ENCODE measurements at regions of chr5 and their contacts with region 1.

Region 1: GRCh38 chr5:124649491-124650146 is 96.8 kb downstream of the ZNF608 start:
- DNase-seq: peak; percentile 71 to 88
- ATAC-seq: peak; percentile 90 to 93 (median 92)
- H3K4me3 ChIP-seq: no peak overlapping the region
- H3K4me3 Mint-ChIP-seq: peak overlapping the region; percentile 82
- H3K27ac ChIP-seq: peak overlapping the region; percentile 8
- H3K27ac Mint-ChIP-seq: peak overlapping the region; percentile 61 to 88
- H3K4me1 ChIP-seq: peaks cover 30% of the 10 kb centered on the region
- H3K4me1 Mint-ChIP-seq: peaks cover 34 to 44% of the 10 kb centered on the region in 2 donors
- H3K27me3 ChIP-seq: peaks cover 68% of the 10 kb centered on the region
- H3K27me3 Mint-ChIP-seq: peaks cover 41 to 47% of the 10 kb centered on the region in 2 donors
- CTCF ChIP-seq: no peak

Region 2: GRCh38 chr5:124735169-124735858 is 85.7 kb after region 1 on chr5:
- intact Hi-C with region 1: no loop called
- DNase-seq: no peak
- ATAC-seq: no peak
- H3K4me3 ChIP-seq: no peak overlapping the region
- H3K4me3 Mint-ChIP-seq: no peak overlapping the region
- H3K27ac ChIP-seq: no peak overlapping the region
- H3K27ac Mint-ChIP-seq: no peak overlapping the region
- H3K4me1 ChIP-seq: no peaks in the 10 kb centered on the region
- H3K4me1 Mint-ChIP-seq: peaks cover 11 to 14% of the 10 kb centered on the region in 2 donors
- H3K27me3 ChIP-seq: peaks cover 9% of the 10 kb centered on the region
- H3K27me3 Mint-ChIP-seq: peaks cover 40 to 76% of the 10 kb centered on the region in 2 donors
- CTCF ChIP-seq: no peak

Region 3: DNA sequence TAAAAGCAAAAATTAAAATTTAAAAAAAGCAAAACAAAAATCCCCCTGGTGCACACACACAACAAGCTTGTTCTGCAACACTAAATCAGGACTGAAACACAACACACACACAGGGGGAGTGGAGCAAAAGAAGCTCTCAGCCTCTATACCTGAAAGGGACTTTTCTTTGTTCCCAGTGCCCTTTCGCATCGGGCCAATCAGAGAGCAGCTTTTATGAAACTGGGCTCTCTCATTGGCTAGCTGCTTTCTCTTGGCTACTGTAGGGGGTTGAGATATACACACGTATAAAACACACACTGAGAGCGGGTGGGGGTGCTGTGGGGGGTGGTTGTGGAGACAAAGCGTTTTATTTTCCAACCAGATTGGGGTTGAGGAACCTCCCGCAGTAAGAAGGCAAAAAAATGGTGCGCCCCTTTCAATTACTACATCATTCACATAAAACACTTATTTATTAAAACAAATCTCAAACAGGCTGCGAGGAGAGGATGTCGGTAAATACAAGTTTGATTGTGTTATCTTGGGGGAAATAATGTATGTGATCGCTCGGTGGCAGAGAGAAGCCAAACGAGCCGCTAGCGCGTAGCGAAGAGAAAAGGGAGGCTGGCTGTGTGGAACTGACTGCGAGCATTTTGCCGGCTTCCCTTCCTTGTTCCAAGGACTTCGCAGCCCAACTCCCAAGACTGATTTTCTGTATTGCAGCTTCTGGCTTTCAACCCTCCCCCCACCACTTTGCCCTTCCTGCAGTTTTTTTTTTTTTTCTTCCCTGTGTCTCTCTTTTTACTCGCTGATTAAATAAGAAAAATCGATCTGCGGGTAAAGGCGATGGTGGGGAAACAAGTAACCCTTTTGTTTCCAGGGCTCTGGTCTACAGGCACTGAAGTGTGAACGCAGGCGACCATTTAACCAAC is 99.3 kb after region 1 on chr5:
- intact Hi-C with region 1: loop called (anchors 5 kb)
- DNase-seq: peak in 1 of 2 donors; percentile 33
- ATAC-seq: peak; percentile 79 to 81 (median 81)
- H3K4me3 ChIP-seq: peak overlapping the region; percentile 39
- H3K4me3 Mint-ChIP-seq: peak overlapping the region; percentile 75
- H3K27ac ChIP-seq: peak overlapping the region; percentile 52
- H3K27ac Mint-ChIP-seq: peak overlapping the region in 1 of 2 donors; percentile 66
- H3K4me1 ChIP-seq: peaks cover 26% of the 10 kb centered on the region
- H3K4me1 Mint-ChIP-seq: peaks cover 36 to 38% of the 10 kb centered on the region in 2 donors
- H3K27me3 ChIP-seq: peaks cover 29% of the 10 kb centered on the region
- H3K27me3 Mint-ChIP-seq: peaks cover 18 to 47% of the 10 kb centered on the region in 2 donors
- CTCF ChIP-seq: no peak

Region 4: DNA sequence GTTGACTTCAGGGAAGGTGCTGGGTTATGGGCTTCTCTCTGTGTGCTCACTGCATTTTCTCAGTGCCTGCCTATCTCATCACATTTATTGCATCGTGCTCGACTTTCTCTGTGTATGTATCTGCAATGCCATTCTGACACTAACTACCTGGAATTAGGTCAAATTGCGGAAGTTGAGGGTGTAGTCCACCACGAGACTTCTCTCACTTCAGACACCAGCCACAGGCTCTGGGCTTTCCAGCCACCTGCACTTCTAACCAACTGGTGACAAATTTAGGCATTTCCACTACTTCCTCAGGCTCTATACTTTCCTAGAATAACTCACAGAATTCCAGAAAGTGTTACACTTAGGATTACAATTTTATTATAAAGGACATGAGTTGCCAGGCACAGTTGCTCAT is 285.4 kb after region 1 on chr5:
- intact Hi-C with region 1: loop called (anchors 2 kb)
- DNase-seq: peak; percentile 38 to 48
- ATAC-seq: peak; percentile 51 to 76 (median 72)
- H3K4me3 ChIP-seq: no peak overlapping the region
- H3K4me3 Mint-ChIP-seq: peak overlapping the region; percentile 76
- H3K27ac ChIP-seq: peak overlapping the region; percentile 60
- H3K27ac Mint-ChIP-seq: peak overlapping the region; percentile 86 to 96
- H3K4me1 ChIP-seq: peaks cover 20% of the 10 kb centered on the region
- H3K4me1 Mint-ChIP-seq: peaks cover 21 to 26% of the 10 kb centered on the region in 2 donors
- H3K27me3 ChIP-seq: no peaks in the 10 kb centered on the region
- H3K27me3 Mint-ChIP-seq: no peaks in the 10 kb centered on the region
- CTCF ChIP-seq: no peak